Ascending aorta (tissue), 2 donors: ENCODE measurements at regions of chr3 and their contacts with region 1.

Region 1: GRCh38 chr3:172415323-172415722 is 32.9 kb downstream of the GHSR start:
- DNase-seq: no peak
- H3K4me3 ChIP-seq: no peak overlapping the region
- H3K27ac ChIP-seq: no peak overlapping the region
- H3K4me1 ChIP-seq: no peaks in the 10 kb centered on the region
- H3K27me3 ChIP-seq: no peaks in the 10 kb centered on the region
- CTCF ChIP-seq: no peak

Region 2: GRCh38 chr3:171248425-171249111 is 1166.8 kb before region 1 on chr3:
- intact Hi-C with region 1: loop called (anchors 10 kb)
- DNase-seq: no peak
- H3K4me3 ChIP-seq: no peak overlapping the region
- H3K27ac ChIP-seq: no peak overlapping the region
- H3K4me1 ChIP-seq: no peaks in the 10 kb centered on the region
- H3K27me3 ChIP-seq: no peaks in the 10 kb centered on the region
- CTCF ChIP-seq: no peak